Colonic mucosa (tissue), 4 donors: ENCODE measurements at regions of chr7 and their contacts with region 1.

Region 1: GRCh38 chr7:142782922-142783900 is 12.4 kb downstream of the PRSS2 start:
- DNase-seq: peak; percentile 86
- H3K4me3 ChIP-seq: peak overlapping the region; percentile 18
- H3K27ac ChIP-seq: no peak overlapping the region
- H3K4me1 ChIP-seq: no peaks in the 10 kb centered on the region
- H3K27me3 ChIP-seq: no peaks in the 10 kb centered on the region
- CTCF ChIP-seq: peak; percentile 83

Region 2: DNA sequence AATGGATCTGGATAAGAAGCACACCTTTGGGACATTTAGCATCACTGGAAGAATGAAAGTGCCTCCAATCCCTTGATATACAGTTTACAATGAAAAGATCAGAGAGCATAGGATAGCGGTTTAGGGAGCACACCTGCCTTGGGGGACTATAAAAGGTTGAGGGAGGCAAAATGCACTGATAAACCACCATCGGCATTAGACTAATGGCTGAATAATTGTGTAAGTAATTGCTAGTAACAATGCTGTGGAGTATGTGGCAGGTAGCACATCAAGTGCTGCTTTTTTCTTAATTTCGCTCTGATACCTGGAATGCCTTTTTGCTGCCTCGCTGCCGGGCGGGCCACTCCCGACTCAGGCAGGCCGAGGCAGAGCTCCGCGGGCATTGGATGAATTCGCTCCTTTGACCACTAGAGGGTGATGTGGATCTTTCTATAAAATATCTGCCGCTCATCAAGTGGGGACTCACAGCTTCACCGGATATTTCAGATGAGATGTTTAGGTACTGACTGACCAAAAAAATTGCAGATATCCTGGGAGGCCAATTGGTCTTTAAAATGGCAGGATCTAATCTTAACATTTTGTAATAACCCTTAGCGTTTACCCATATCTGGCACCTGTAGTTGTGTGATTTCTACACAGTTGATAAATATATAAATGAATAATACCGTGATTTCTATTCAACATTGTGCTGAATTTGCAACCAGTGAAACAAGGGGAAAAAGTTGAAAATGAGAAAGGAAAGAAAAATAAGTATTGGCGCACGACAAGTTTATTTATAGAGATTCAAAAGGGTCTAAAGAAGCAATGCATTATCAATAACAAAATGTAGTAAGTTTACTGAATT is 150.7 kb before region 1 on chr7:
- intact Hi-C with region 1: loop called (anchors 5 kb)
- DNase-seq: peak; percentile 48
- H3K4me3 ChIP-seq: no peak overlapping the region
- H3K27ac ChIP-seq: no peak overlapping the region
- H3K4me1 ChIP-seq: no peaks in the 10 kb centered on the region
- H3K27me3 ChIP-seq: no peaks in the 10 kb centered on the region
- CTCF ChIP-seq: peak; percentile 71